Activated CD4-positive, alpha-beta T cell treated with anti-CD3 and anti-CD28 coated beads for 36 hours (primary cell): ENCODE measurements at regions of chr6 and their contacts with region 1.

Region 1: DNA sequence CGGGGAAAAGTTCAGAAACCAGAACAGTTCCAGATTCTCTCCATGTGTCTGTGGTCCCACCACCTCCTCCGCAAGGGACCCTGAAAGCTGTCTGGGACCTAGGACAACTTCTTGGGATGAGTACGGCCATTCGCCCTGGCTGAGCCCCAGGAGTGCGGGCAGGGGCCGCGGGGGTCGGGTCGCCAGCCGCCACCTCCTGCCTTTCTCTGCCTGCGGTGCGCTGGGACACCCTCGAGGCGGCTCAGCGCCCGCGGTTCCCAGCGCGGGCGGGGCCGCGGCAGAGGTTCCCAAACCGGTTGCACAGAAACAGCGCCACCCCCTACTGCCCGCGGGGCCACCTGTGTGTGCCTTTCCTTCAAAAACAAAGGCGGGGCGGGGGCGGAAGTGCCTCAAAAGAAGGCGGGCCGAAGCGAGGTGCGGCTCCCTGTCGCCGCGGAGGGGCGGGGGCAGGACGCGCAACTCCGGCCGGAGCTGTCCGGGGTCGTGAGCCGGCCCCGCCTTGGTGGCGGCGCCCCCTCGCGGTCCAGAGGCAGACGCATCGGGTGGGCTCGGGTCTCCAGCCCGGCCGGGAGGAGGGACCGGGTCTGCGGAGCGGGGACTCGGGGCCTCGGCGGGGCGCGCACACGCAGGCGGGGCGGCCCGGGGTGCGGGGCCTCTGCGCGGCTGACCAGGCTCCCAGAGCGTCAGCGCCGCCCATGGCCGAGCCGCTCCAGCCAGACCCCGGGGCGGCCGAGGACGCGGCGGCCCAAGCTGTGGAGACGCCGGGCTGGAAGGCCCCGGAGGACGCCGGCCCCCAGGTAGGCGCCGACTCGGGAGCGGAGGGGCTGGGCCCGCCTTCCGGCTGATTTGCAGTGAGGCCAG is at the start of gene HEBP2:
- DNase-seq: peak; percentile 91
- ATAC-seq: peak; percentile 88
- H3K4me3 Mint-ChIP-seq: peak within 1 kb of the TSS; percentile 70
- H3K27ac Mint-ChIP-seq: peak within 1 kb of the TSS; percentile 37
- H3K4me1 Mint-ChIP-seq: peaks cover 6% of the 10 kb centered on the region
- H3K27me3 Mint-ChIP-seq: no peaks in the 10 kb centered on the region
- total RNA-seq, gene HEBP2: 4.0 to 4.7 TPM

Region 2: DNA sequence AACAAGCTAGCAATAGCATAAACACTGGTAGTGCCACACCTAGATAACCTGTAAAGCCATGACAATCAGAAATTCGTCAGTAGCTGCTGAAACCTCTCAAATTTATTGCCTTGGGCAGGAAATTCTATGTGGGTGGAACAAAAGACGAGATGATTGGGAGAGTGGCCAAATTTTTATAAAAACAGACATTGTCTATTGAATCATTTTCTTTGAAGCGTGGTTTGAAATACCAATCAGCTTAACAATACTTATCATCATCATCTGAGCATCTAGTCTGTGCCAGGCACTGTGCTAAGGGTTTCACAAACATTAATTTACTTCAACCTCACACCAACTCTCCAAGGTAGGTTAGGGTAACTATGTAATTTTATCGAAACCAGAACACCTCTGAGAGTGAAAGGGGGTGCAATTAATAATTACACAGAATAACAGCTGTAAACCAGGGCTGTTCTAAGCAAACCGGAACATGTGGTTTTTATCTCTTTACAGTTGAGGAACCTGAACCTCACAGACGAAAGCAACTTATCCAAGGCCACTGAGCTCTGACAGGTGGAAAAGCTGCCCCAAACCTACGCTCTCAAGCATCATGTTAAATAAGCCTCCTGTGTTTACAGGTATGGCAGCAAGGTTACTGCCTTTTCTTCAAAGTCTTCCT is 51.8 kb after region 1 on chr6:
- CTCF ChIA-PET with region 1: interaction called, 5 read pairs
- POLR2A ChIA-PET with region 1: no interaction called
- intact Hi-C with region 1: loop called in 1 of 2 experiments (anchors 1 kb)
- DNase-seq: peak; percentile 15
- ATAC-seq: peak; percentile 52
- H3K4me3 Mint-ChIP-seq: peak overlapping the region; percentile 24
- H3K27ac Mint-ChIP-seq: peak overlapping the region; percentile 31
- H3K4me1 Mint-ChIP-seq: peaks cover 23% of the 10 kb centered on the region
- H3K27me3 Mint-ChIP-seq: no peaks in the 10 kb centered on the region

Region 3: DNA sequence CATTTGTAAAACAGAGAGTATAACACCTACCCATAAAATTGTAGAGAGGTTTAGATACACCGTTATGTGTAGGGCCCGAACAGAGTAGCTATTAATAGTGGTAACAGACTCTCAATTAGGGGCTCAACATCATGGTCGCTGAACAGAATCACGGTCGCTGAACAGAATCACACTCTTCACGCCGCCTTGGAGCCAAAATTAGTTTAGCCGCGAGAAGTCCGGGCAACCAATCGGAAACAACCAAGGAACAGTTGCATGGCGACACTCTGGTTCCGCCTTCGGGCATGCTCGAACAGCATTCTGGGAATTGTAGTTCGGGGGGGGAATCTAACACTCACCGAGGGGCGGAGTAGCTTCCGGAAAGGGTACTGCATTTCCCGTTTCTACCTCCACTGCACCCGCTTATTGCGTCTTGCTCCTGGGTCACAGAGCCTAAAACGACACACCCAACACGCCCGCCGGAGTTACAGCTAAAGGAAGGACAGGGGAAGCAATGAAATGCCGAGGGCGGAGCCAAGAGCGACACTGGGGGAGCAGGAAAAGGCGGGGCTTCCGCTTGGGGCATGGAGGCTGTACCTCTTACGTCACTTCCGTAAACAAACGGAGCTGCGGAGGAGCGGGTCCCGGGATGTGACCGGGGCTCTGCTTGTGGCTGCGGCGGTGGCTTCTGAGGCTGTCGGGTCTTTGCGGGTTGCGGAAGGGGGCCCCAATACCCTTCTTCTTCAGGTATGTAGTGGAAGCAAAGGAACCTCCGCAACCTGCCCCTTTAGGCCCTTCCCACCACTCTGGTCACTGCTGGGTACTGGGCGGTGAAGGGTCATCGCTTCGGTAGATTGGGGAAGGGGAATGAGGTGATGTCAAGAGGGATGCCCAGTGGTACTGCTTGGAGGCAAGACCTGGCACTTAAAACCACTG is 369.4 kb after region 1 on chr6 and contains the start of gene CCDC28A:
- CTCF ChIA-PET with region 1: no interaction called
- POLR2A ChIA-PET with region 1: no interaction called
- intact Hi-C with region 1: loop called in 1 of 2 experiments (anchors 1 kb)
- DNase-seq: peak; percentile 95
- ATAC-seq: peak; percentile 91
- H3K4me3 Mint-ChIP-seq: peak within 1 kb of the TSS; percentile 84
- H3K27ac Mint-ChIP-seq: peak within 1 kb of the TSS; percentile 98
- H3K4me1 Mint-ChIP-seq: peaks cover 31% of the 10 kb centered on the region
- H3K27me3 Mint-ChIP-seq: no peaks in the 10 kb centered on the region
- total RNA-seq, gene CCDC28A: 14.8 to 16.8 TPM